ENCODE measurements at regions of chr17 and their contacts with region 1.

Region 1: GRCh38 chr17:70767102-70767701 is 597.9 kb downstream of the KCNJ2 start:
- DNase-seq: peak; percentile 60
- H3K4me3 ChIP-seq: no peak overlapping the region; a peak in 1 of 4 replicates
- H3K27ac ChIP-seq: no peak overlapping the region
- H3K4me1 ChIP-seq: no peaks in the 10 kb centered on the region; a peak in 1 of 4 replicates
- H3K27me3 ChIP-seq: no peaks in the 10 kb centered on the region
- CTCF ChIP-seq: peak; percentile 99
- EP300 ChIP-seq: no peak
- RAD21 ChIP-seq: peak; percentile 95

Region 2: GRCh38 chr17:70629902-70630301 is 137.3 kb before region 1 on chr17:
- CTCF ChIA-PET with region 1: interaction called, 10 read pairs
- POLR2A ChIA-PET with region 1: no interaction called
- DNase-seq: peak; percentile 43
- H3K4me3 ChIP-seq: no peak overlapping the region
- H3K27ac ChIP-seq: no peak overlapping the region
- H3K4me1 ChIP-seq: no peaks in the 10 kb centered on the region
- H3K27me3 ChIP-seq: peaks cover 6% of the 10 kb centered on the region; the same call in 1 of the 2 replicates
- CTCF ChIP-seq: peak; percentile 56
- EP300 ChIP-seq: no peak
- RAD21 ChIP-seq: peak; percentile 84

Region 3: DNA sequence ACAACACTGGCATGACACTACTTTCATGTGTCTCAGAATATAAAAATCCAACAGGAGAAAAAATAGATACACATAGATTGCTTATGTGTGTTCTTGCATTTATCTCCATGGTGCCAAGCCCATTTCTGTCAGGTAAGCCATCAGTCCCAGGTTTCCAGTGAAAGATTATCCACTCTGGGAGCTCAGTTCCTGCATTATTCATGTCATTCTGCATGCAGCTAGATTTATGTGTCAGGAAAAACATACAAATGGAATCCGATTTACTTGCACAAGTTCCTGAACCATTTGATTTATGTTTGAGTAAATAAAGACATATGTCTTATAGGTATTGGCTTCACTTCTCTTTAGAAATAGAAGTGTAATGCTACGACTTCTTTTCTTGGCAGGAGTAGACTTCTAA is 28.1 kb before region 1 on chr17:
- CTCF ChIA-PET with region 1: interaction called, 18 read pairs
- POLR2A ChIA-PET with region 1: no interaction called
- DNase-seq: no peak
- H3K4me3 ChIP-seq: no peak overlapping the region
- H3K27ac ChIP-seq: no peak overlapping the region
- H3K4me1 ChIP-seq: no peaks in the 10 kb centered on the region; a peak in 1 of 4 replicates
- H3K27me3 ChIP-seq: no peaks in the 10 kb centered on the region
- CTCF ChIP-seq: no peak
- EP300 ChIP-seq: no peak
- RAD21 ChIP-seq: no peak

Region 4: DNA sequence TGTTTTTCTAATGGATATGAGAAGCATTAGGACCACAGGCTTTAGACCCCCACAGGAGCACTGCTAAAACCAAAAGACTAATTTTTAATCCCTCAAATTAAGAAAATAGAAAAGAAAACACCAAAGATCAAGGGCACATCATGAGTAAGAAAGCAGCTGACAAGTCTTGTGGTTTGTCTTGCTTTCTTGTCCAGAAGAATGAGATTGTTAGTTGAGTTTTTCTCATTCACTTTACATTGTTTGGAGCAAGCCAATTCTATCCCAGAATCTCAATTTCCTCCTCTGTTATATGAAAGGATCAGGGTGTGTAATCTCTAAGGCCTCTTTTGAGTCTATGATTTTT is 301.2 kb after region 1 on chr17:
- CTCF ChIA-PET with region 1: interaction called, 10 read pairs
- POLR2A ChIA-PET with region 1: no interaction called
- DNase-seq: no peak
- H3K4me3 ChIP-seq: no peak overlapping the region
- H3K27ac ChIP-seq: no peak overlapping the region
- H3K4me1 ChIP-seq: peaks cover 0 to 4% of the 10 kb centered on the region in 2 experiments; a peak in 1 of 4 replicates
- H3K27me3 ChIP-seq: no peaks in the 10 kb centered on the region
- CTCF ChIP-seq: no peak
- EP300 ChIP-seq: no peak
- RAD21 ChIP-seq: no peak

Region 5: GRCh38 chr17:71229070-71229469 is 461.9 kb after region 1 on chr17:
- CTCF ChIA-PET with region 1: interaction called, 10 read pairs
- POLR2A ChIA-PET with region 1: no interaction called
- DNase-seq: no peak
- H3K4me3 ChIP-seq: no peak overlapping the region
- H3K27ac ChIP-seq: no peak overlapping the region
- H3K4me1 ChIP-seq: peaks cover 0 to 10% of the 10 kb centered on the region in 2 experiments; a peak in 2 of 4 replicates
- H3K27me3 ChIP-seq: no peaks in the 10 kb centered on the region
- CTCF ChIP-seq: no peak
- EP300 ChIP-seq: no peak
- RAD21 ChIP-seq: no peak

Region 6: GRCh38 chr17:72120642-72121163 is 1353.5 kb after region 1 on chr17 and contains the start of gene SOX9:
- CTCF ChIA-PET with region 1: interaction called, 21 read pairs
- POLR2A ChIA-PET with region 1: no interaction called
- DNase-seq: peak; percentile 95
- H3K4me3 ChIP-seq: peak within 1 kb of the TSS; percentile 82 to 99
- H3K27ac ChIP-seq: peak within 1 kb of the TSS; percentile 60 to 90
- H3K4me1 ChIP-seq: peaks cover 16 to 29% of the 10 kb centered on the region in 2 experiments; a peak in 3 of 4 replicates
- H3K27me3 ChIP-seq: no peaks in the 10 kb centered on the region
- CTCF ChIP-seq: no peak
- EP300 ChIP-seq: peak in 1 of 2 experiments; percentile 26; a peak in 1 of 4 replicates
- RAD21 ChIP-seq: no peak
- polyA plus RNA-seq, gene SOX9: 20.2 and 35.3 TPM in 2 replicates